Activated CD4-positive, alpha-beta T cell treated with anti-CD3 and anti-CD28 coated beads for 36 hours (primary cell): ENCODE measurements at regions of chr5 and their contacts with region 1.

Region 1: GRCh38 chr5:140710899-140711552 is 10.8 kb downstream of the ZMAT2 start:
- DNase-seq: peak; percentile 93
- ATAC-seq: peak; percentile 95
- H3K4me3 Mint-ChIP-seq: peak overlapping the region; percentile 86
- H3K27ac Mint-ChIP-seq: peak overlapping the region; percentile 97
- H3K4me1 Mint-ChIP-seq: peaks cover 18% of the 10 kb centered on the region
- H3K27me3 Mint-ChIP-seq: no peaks in the 10 kb centered on the region

Region 2: GRCh38 chr5:140302786-140303639 is 408.0 kb before region 1 on chr5 and contains the start of gene PFDN1:
- CTCF ChIA-PET with region 1: no interaction called
- POLR2A ChIA-PET with region 1: no interaction called
- intact Hi-C with region 1: loop called (anchors 2 to 5 kb)
- DNase-seq: peak; percentile 96
- ATAC-seq: peak; percentile 99
- H3K4me3 Mint-ChIP-seq: peak within 1 kb of the TSS; percentile 91
- H3K27ac Mint-ChIP-seq: peak within 1 kb of the TSS; percentile 91
- H3K4me1 Mint-ChIP-seq: peaks cover 29% of the 10 kb centered on the region
- H3K27me3 Mint-ChIP-seq: peaks cover 4% of the 10 kb centered on the region
- total RNA-seq, gene PFDN1: 52.6 to 63.2 TPM

Region 3: GRCh38 chr5:140564196-140565023 is 146.6 kb before region 1 on chr5 and contains the starts of genes APBB3 and SLC35A4:
- CTCF ChIA-PET with region 1: interaction called, 3 read pairs
- POLR2A ChIA-PET with region 1: no interaction called
- intact Hi-C with region 1: loop called (anchors 1 to 5 kb)
- DNase-seq: peak; percentile 96
- ATAC-seq: peak; percentile 95
- H3K4me3 Mint-ChIP-seq: peak within 1 kb of the TSS; percentile 98
- H3K27ac Mint-ChIP-seq: peak within 1 kb of the TSS; percentile 99
- H3K4me1 Mint-ChIP-seq: peaks cover 49% of the 10 kb centered on the region
- H3K27me3 Mint-ChIP-seq: no peaks in the 10 kb centered on the region
- total RNA-seq, gene APBB3: 12.8 to 19.0 TPM
- total RNA-seq, gene SLC35A4: 61.8 to 65.4 TPM

Region 4: DNA sequence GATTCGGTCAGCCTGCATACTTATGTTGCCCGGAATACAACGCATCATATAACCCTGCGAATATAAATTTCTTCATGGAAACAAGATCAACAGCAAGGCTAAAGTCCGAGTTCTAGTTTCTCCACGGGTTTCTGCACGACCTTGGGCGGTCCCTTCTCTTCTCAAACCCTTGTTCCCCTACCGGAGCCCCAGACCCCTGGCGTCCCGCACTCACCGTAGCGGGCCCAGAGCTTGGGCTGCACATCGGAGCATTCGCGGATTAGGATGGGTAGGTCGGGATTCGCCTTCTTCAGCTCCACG is 64.0 kb before region 1 on chr5:
- CTCF ChIA-PET with region 1: no interaction called
- POLR2A ChIA-PET with region 1: interaction called, 3 read pairs
- intact Hi-C with region 1: loop called in 1 of 2 experiments (anchors 1 kb)
- DNase-seq: no peak
- ATAC-seq: peak; percentile 14
- H3K4me3 Mint-ChIP-seq: peak overlapping the region; percentile 97
- H3K27ac Mint-ChIP-seq: peak overlapping the region; percentile 98
- H3K4me1 Mint-ChIP-seq: peaks cover 27% of the 10 kb centered on the region
- H3K27me3 Mint-ChIP-seq: no peaks in the 10 kb centered on the region

Region 5: DNA sequence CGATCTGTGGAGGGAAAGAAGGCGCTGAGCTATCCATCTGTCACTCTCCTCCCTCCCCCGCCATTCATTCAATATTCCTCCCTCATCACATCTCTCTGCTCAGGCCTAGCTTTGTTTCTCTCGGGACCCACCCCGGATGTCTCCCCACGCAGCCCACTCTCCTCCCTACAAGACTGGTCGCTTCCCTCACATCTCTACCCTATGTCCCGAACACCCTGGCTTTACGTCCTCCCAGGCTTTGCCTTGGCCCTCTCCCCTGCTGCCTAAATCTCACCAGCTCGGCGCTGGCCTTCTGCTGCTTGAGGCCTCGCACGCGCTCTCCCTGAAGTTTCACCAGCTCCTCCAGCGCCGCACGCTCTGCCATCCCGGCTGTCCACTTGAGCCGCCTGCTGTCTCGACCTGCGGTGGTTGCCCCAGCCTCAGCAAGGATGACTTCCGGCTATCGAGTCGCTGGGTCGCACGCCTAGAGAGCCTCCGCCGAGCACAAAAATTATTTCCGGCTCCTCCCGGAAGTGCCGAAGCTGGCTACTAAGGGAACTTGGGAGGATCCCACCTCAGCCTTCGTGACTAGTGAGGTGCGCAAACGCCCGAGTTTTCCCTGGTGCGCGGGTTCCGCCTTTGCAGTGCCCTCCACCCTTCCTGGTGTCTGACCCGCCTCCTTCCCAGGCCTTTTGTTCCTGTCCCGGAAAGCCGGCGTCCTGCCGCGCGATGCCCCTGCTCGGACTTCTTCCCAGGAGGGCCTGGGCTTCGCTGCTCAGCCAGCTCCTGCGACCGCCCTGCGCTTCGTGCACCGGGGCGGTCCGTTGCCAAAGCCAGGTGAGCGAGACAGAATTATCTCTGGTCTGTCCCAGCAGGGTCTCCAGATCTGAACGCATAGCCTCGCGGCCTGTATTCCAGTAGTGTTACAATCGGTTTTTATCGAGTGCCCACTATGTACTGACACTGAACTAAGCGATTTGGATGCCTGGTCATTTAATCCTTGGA is 19.8 kb before region 1 on chr5 and contains the starts of genes HARS1 and HARS2:
- CTCF ChIA-PET with region 1: interaction called, 5 read pairs
- POLR2A ChIA-PET with region 1: interaction called, 4 read pairs
- intact Hi-C with region 1: loop called in 1 of 2 experiments (anchors 1 kb)
- DNase-seq: peak; percentile 91
- ATAC-seq: peak; percentile 95
- H3K4me3 Mint-ChIP-seq: peak within 1 kb of the TSS; percentile 97
- H3K27ac Mint-ChIP-seq: peak within 1 kb of the TSS; percentile 98
- H3K4me1 Mint-ChIP-seq: peaks cover 41% of the 10 kb centered on the region
- H3K27me3 Mint-ChIP-seq: no peaks in the 10 kb centered on the region
- total RNA-seq, gene HARS1: 83.3 to 91.0 TPM
- total RNA-seq, gene HARS2: 20.9 to 28.1 TPM

Region 6: GRCh38 chr5:140725799-140726471 is 14.9 kb after region 1 on chr5:
- CTCF ChIA-PET with region 1: interaction called, 6 read pairs
- POLR2A ChIA-PET with region 1: interaction called, 3 read pairs
- intact Hi-C with region 1: loop called (anchors 1 to 2 kb)
- DNase-seq: peak; percentile 87
- ATAC-seq: peak; percentile 94
- H3K4me3 Mint-ChIP-seq: peak overlapping the region; percentile 67
- H3K27ac Mint-ChIP-seq: peak overlapping the region; percentile 45
- H3K4me1 Mint-ChIP-seq: peaks cover 11% of the 10 kb centered on the region
- H3K27me3 Mint-ChIP-seq: peaks cover 22% of the 10 kb centered on the region

Region 7: GRCh38 chr5:140785905-140786686 is 75.1 kb after region 1 on chr5 and contains the start of gene PCDHA1:
- CTCF ChIA-PET with region 1: no interaction called
- POLR2A ChIA-PET with region 1: no interaction called
- intact Hi-C with region 1: no loop called
- DNase-seq: no peak
- ATAC-seq: no peak
- H3K4me3 Mint-ChIP-seq: no peak within 1 kb of the TSS
- H3K27ac Mint-ChIP-seq: no peak within 1 kb of the TSS
- H3K4me1 Mint-ChIP-seq: no peaks in the 10 kb centered on the region
- H3K27me3 Mint-ChIP-seq: peaks cover 33% of the 10 kb centered on the region
- total RNA-seq, gene PCDHA1: not detected

Region 8: GRCh38 chr5:141121563-141121962 is 410.5 kb after region 1 on chr5 and contains the start of gene PCDHB4:
- CTCF ChIA-PET with region 1: no interaction called
- POLR2A ChIA-PET with region 1: no interaction called
- intact Hi-C with region 1: no loop called
- DNase-seq: peak; percentile 51
- ATAC-seq: no peak
- H3K4me3 Mint-ChIP-seq: no peak within 1 kb of the TSS
- H3K27ac Mint-ChIP-seq: no peak within 1 kb of the TSS
- H3K4me1 Mint-ChIP-seq: no peaks in the 10 kb centered on the region
- H3K27me3 Mint-ChIP-seq: peaks cover 21% of the 10 kb centered on the region
- total RNA-seq, gene PCDHB4: not detected